ENCODE measurements at regions of chr15 and their contacts with region 1.

Region 1: DNA sequence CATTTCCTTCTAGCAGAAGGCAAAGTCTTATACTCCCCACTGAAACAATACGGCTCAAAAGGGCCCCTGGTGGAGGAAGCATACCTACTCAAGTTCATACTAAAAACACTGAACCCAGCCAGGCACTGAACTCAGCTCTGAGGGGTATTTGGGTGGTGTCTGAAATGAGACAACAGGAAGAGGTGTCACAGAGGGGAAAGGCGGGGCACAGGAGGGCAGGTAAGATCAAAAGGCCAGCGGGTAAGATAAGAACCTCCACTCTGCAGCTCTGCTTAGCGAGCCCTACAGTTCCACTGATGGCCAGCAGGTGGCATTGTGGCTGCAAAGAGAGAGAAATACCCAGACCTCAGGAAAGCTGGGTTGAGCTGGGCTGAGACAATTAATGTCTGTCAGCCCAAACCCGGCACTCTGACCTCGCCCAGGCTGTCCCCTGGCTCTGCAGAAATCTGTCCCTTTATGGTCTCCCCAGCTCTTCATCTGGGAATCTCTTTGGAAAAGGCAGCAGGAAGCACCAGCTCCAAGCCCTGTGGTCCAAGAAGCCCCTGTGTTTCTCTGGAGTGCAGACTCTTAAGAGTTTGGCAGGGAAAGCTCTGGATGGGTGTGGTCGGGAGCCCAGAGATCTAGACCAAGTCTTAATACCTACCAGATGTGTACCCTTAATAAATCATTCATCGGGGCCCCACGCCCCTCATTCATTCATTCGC is 8.4 kb downstream of the MFGE8 start:
- DNase-seq: no peak
- H3K4me3 ChIP-seq: no peak overlapping the region
- CTCF ChIP-seq: peak; percentile 91

Region 2: GRCh38 chr15:88878720-88879184 is 26.0 kb before region 1 on chr15:
- CTCF ChIA-PET with region 1: interaction called, 27 read pairs
- POLR2A ChIA-PET with region 1: no interaction called
- DNase-seq: no peak
- H3K4me3 ChIP-seq: no peak overlapping the region
- CTCF ChIP-seq: peak; percentile 90

Region 3: GRCh38 chr15:88982304-88982945 is 77.6 kb after region 1 on chr15:
- CTCF ChIA-PET with region 1: interaction called, 10 read pairs
- POLR2A ChIA-PET with region 1: interaction called, 16 read pairs
- DNase-seq: no peak
- H3K4me3 ChIP-seq: no peak overlapping the region
- CTCF ChIP-seq: no peak

Region 4: DNA sequence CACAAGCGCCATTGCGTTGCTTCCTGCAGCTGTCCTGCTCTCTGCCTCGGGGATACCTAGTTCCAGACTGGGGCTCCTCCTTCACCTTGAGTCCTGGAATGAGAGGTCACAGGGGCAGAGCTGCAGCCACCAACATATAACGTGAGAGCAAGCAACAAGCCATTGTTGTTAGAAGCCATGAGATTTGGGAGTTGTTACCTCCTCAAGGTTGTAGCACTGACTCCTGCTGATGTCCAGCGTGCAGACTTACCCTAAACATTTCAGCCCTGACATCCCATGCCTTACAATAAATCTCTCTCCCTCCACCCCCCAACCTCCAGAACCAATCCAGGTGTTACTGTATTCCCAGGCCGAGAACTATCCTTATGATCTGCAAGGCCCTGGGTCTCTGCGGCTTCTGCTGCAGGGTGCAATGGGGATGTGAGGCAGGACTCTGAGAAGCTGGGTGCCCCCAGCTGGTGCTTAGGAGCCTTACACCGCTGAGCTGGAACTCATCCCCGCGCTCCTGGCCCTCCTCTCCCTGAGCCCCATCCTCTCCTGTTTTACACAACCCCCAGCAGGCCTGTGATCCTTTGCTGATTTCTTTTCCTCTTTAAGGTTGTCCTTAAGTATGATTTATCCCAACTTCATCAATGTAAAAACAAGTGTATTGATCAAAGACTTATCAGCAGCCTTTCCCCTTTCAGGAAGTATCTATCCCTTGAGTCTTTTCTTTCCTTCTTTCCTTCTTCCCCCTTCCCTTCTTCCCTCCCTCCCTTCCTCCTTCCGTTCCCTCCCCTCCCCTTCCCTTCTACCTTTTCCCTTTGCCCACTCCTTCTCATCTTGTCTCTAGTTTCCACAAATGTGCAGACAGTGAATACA is 99.3 kb after region 1 on chr15:
- CTCF ChIA-PET with region 1: interaction called, 176 read pairs
- POLR2A ChIA-PET with region 1: interaction called, 3 read pairs
- DNase-seq: no peak
- H3K4me3 ChIP-seq: no peak overlapping the region
- CTCF ChIP-seq: peak; percentile 82

Region 5: DNA sequence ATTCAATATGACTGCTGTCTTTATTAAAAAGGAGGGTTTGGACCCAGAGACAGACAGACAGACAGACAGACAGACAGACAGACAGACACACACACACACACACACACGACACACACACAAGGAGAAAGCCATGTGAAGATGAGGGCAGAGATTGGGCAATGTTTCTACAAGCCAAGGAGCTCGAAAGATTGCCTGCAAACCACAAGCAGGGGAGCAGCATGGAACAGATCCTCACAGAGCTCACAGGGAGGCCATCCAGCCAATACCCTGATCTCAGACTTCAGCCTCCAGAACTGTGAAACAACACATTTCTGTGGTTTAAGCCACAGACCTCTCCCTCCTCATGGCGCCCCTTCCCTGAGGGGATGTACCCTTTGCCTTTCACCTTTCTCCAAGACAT is 147.7 kb after region 1 on chr15:
- CTCF ChIA-PET with region 1: interaction called, 37 read pairs
- POLR2A ChIA-PET with region 1: no interaction called
- DNase-seq: peak; percentile 99
- H3K4me3 ChIP-seq: no peak overlapping the region
- CTCF ChIP-seq: no peak

Region 6: DNA sequence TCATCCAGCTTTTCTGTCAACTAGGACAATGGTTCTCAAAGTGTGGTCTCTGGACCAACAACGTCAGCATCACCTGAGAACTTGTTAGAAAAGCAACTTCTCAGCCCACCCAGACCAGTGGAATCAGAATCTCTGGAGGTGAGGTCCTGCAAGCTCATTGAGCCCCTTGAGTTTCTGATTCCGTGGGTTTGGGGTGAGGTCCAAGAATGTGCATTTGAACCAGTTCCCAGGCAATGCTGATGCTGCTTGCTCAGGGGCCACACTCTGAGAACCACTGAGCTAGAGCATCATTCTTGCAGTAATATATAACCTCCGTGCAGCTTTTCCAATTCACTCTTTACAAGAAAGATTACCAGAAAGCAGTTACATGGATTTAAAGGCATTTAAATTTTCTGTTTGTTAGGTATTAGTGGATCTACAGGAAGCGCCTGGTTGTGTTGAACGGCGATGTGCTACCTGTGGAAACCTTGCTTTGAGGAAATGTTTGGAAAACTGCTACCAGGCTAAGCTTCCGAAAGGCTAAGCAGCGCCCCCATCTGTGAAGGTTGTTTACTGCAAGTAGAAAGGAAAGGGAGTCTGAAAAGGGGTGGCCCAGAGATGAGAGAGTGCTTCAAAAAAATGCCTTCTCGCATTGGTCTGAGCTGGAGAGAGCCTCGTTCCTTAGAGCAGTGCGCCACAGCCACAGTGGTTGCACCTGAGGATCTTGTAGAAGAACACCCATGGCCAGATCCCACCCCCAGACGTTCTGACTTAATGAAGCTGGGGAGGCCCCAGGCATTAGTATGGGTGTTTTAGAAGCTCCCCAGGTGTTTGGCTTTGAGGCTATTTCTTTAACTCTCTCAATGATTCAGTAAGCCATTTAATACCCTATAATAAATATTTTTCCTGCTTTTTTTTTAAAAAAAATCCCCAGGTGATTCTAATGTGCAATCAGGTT is 266.6 kb after region 1 on chr15:
- CTCF ChIA-PET with region 1: interaction called, 28 read pairs
- POLR2A ChIA-PET with region 1: no interaction called
- DNase-seq: no peak
- H3K4me3 ChIP-seq: no peak overlapping the region
- CTCF ChIP-seq: peak; percentile 74